CD4-positive, alpha-beta T cell (primary cell): ENCODE measurements at regions of chrX and their contacts with region 1.

Region 1: GRCh38 chrX:48835524-48836329 is at the start of gene PCSK1N:
- DNase-seq: peak in 11 of 14 experiments; percentile 11 to 70 (median 35)
- ATAC-seq: peak; percentile 38
- H3K4me3 ChIP-seq: peak within 1 kb of the TSS; percentile 53
- H3K4me3 Mint-ChIP-seq: peak within 1 kb of the TSS; percentile 72
- H3K27ac ChIP-seq: no peak within 1 kb of the TSS
- H3K27ac Mint-ChIP-seq: peak within 1 kb of the TSS; percentile 6
- H3K4me1 ChIP-seq: peaks cover 21% of the 10 kb centered on the region
- H3K4me1 Mint-ChIP-seq: peaks cover 17% of the 10 kb centered on the region
- H3K27me3 ChIP-seq: peaks cover 0 to 24% of the 10 kb centered on the region in 2 experiments
- H3K27me3 Mint-ChIP-seq: peaks cover 30% of the 10 kb centered on the region
- CTCF ChIP-seq: no peak
- total RNA-seq, gene PCSK1N: 3.5 to 4.9 TPM

Region 2: DNA sequence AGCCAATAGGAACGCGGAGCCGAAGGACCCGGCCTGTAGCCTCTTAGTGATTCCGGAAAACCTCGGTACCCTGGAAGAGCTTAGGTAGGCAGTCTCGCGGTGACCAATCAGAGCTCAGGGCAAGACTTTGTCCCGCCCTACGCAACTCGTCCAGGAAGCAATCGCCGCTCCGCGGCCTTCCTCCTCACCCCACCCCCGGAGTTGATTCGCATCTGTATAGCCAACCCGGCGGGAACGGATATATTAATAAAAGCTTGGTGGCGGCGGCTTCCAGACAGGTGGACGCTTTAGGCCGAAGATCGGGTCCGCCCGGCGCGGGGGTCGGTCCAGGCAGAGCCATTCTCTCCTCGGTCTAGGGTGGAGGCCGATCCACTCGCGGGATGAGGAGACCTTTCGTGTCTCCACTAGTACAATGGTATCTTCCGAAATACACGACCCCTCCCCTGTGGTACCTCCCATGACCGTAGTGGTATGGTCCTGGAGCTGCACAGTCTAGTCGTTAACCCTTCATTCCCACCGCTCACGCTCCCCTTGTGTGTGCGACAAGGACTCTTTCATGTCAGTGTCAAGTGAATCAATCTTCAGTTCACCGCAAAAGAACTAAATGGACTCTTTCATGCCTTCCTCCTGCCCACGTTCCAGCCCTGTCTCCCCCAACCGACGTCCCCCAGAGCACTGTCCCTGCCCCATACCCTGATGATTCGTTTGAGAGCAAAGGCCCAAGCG is 98.4 kb before region 1 on chrX:
- CTCF ChIA-PET with region 1: no interaction called
- POLR2A ChIA-PET with region 1: no interaction called
- intact Hi-C with region 1: no loop called
- DNase-seq: peak; percentile 72 to 97 (median 84)
- ATAC-seq: peak; percentile 94
- H3K4me3 ChIP-seq: peak overlapping the region; percentile 74
- H3K4me3 Mint-ChIP-seq: peak overlapping the region; percentile 92
- H3K27ac ChIP-seq: peak overlapping the region; percentile 76 to 92
- H3K27ac Mint-ChIP-seq: peak overlapping the region; percentile 96
- H3K4me1 ChIP-seq: peaks cover 17% of the 10 kb centered on the region
- H3K4me1 Mint-ChIP-seq: peaks cover 24% of the 10 kb centered on the region
- H3K27me3 ChIP-seq: no peaks in the 10 kb centered on the region
- H3K27me3 Mint-ChIP-seq: no peaks in the 10 kb centered on the region
- CTCF ChIP-seq: no peak

Region 3: GRCh38 chrX:48794911-48795501 is 40.7 kb before region 1 on chrX:
- CTCF ChIA-PET with region 1: no interaction called
- POLR2A ChIA-PET with region 1: no interaction called
- intact Hi-C with region 1: no loop called
- DNase-seq: no peak
- ATAC-seq: no peak
- H3K4me3 ChIP-seq: no peak overlapping the region
- H3K4me3 Mint-ChIP-seq: no peak overlapping the region
- H3K27ac ChIP-seq: no peak overlapping the region
- H3K27ac Mint-ChIP-seq: no peak overlapping the region
- H3K4me1 ChIP-seq: no peaks in the 10 kb centered on the region
- H3K4me1 Mint-ChIP-seq: no peaks in the 10 kb centered on the region
- H3K27me3 ChIP-seq: no peaks in the 10 kb centered on the region
- H3K27me3 Mint-ChIP-seq: no peaks in the 10 kb centered on the region
- CTCF ChIP-seq: no peak

Region 4: GRCh38 chrX:48883729-48884128 is 48.0 kb after region 1 on chrX:
- CTCF ChIA-PET with region 1: no interaction called
- POLR2A ChIA-PET with region 1: no interaction called
- intact Hi-C with region 1: loop called in 1 of 2 experiments (anchors 10 kb)
- DNase-seq: no peak
- ATAC-seq: no peak
- H3K4me3 ChIP-seq: no peak overlapping the region
- H3K4me3 Mint-ChIP-seq: no peak overlapping the region
- H3K27ac ChIP-seq: no peak overlapping the region
- H3K27ac Mint-ChIP-seq: no peak overlapping the region
- H3K4me1 ChIP-seq: no peaks in the 10 kb centered on the region
- H3K4me1 Mint-ChIP-seq: no peaks in the 10 kb centered on the region
- H3K27me3 ChIP-seq: no peaks in the 10 kb centered on the region
- H3K27me3 Mint-ChIP-seq: no peaks in the 10 kb centered on the region
- CTCF ChIP-seq: no peak